A549 (cell line): ENCODE measurements at regions of chr6 and their contacts with region 1.

Region 1: DNA sequence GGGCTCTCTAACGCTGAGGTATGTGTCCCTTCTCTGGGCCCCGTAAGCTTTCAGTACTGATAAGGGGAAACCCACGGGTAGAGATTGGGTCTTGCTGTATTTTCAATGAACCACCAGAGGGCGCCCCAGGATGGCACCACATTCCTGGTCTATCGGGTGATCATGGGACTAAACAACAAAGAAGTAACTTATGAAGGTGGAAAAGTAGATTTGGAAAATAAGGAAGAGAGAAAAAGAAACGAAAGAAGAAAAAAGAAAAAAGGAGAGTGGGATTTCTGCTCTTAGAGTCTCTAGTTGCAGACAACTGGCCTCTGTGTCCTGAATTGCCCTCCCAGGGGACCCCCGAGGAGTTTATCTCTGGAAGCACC is 93.8 kb downstream of the GMPR start:
- DNase-seq: peak; percentile 59 to 69
- ATAC-seq: peak; percentile 82 to 91
- H3K4me3 ChIP-seq: no peak overlapping the region
- H3K27ac ChIP-seq: peak overlapping the region in 1 of 2 experiments; percentile 64; a peak in 1 of 6 replicates
- H3K4me1 ChIP-seq: peaks cover 38% of the 10 kb centered on the region
- CTCF ChIP-seq: peak; percentile 76
- EP300 ChIP-seq: no peak
- POLR2A ChIP-seq: no peak
- RAD21 ChIP-seq: peak; percentile 80

Region 2: DNA sequence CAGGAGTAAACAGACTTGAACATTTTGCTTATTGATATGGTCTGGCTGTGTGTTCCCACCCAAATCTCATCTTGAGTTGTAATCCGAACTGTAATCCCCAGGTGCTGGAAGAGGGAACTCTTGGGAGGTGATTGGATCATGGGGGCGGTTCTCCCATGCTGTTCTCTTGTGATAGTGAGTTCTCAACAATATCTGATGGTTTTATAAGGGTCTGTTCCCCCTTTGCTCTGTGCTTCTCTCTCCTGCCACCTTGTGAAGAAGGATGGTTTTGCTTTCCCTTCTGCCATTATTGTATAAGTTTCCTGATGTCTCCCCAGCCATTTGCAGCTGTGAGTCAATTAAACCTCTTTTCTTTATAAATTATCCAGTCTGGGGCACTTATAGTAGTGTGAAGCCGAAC is 163.3 kb before region 1 on chr6:
- CTCF ChIA-PET with region 1: no interaction called
- POLR2A ChIA-PET with region 1: no interaction called
- DNase-seq: peak in 1 of 2 experiments; percentile 16
- ATAC-seq: peak in 1 of 2 experiments; percentile 52; a peak in 3 of 6 replicates
- H3K4me3 ChIP-seq: no peak overlapping the region
- H3K27ac ChIP-seq: no peak overlapping the region
- H3K4me1 ChIP-seq: no peaks in the 10 kb centered on the region
- CTCF ChIP-seq: peak; percentile 16; the same call in 1 of the 3 replicates
- EP300 ChIP-seq: no peak
- POLR2A ChIP-seq: no peak
- RAD21 ChIP-seq: peak; percentile 24 to 25; a peak in 3 of 5 replicates

Region 3: DNA sequence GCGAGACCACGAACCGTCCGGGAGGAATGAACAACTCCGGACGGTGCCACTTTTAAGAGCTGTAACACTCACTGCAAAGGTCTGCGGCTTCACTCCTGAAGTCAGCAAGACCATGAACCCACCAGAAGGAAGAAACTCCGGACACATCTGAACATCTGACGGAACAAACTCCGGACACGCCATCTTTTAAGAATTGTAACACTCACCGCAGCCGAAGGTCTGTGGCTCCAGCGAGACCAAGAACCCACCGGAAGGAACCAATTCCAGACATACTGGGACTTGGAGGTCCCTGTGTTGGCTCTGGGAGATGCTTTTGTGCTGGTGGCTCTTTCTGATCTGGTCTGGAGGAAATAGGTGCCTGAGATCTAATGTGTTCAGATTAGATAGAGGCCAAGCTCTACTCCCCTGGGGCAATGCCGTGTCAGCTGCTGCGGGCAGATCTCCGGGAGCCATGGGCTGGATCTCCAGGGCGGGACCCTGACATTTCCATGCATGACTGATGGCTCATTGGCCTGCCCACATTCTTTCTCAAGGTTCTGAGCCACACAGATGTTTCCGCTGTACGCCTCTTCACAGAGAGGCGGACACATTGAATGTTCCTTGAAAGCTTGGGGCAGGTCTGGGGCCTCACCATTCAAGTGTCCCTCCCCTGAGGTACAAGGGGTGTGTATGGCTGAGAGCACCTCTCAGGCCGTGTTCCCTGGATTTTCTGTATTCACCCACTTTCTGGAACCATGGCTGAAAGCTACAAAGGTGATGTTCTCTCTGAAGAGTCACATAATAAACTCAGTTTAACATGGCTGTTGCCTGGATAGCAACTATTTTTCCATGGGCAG is 64.5 kb before region 1 on chr6:
- CTCF ChIA-PET with region 1: no interaction called
- POLR2A ChIA-PET with region 1: no interaction called
- DNase-seq: no peak
- ATAC-seq: no peak
- H3K4me3 ChIP-seq: no peak overlapping the region
- H3K27ac ChIP-seq: no peak overlapping the region
- H3K4me1 ChIP-seq: no peaks in the 10 kb centered on the region
- CTCF ChIP-seq: no peak
- EP300 ChIP-seq: no peak
- POLR2A ChIP-seq: no peak
- RAD21 ChIP-seq: no peak

Region 4: GRCh38 chr6:16316741-16317251 is 15.4 kb before region 1 on chr6:
- CTCF ChIA-PET with region 1: interaction called, 23 read pairs
- POLR2A ChIA-PET with region 1: no interaction called
- DNase-seq: peak; percentile 21 to 26
- ATAC-seq: peak in 1 of 2 experiments; percentile 44; a peak in 3 of 6 replicates
- H3K4me3 ChIP-seq: no peak overlapping the region
- H3K27ac ChIP-seq: no peak overlapping the region
- H3K4me1 ChIP-seq: peaks cover 9% of the 10 kb centered on the region; the same call in 1 of the 3 replicates
- CTCF ChIP-seq: peak; percentile 55
- EP300 ChIP-seq: no peak
- POLR2A ChIP-seq: no peak
- RAD21 ChIP-seq: peak in 1 of 2 experiments; percentile 29; a peak in 1 of 5 replicates

Region 5: DNA sequence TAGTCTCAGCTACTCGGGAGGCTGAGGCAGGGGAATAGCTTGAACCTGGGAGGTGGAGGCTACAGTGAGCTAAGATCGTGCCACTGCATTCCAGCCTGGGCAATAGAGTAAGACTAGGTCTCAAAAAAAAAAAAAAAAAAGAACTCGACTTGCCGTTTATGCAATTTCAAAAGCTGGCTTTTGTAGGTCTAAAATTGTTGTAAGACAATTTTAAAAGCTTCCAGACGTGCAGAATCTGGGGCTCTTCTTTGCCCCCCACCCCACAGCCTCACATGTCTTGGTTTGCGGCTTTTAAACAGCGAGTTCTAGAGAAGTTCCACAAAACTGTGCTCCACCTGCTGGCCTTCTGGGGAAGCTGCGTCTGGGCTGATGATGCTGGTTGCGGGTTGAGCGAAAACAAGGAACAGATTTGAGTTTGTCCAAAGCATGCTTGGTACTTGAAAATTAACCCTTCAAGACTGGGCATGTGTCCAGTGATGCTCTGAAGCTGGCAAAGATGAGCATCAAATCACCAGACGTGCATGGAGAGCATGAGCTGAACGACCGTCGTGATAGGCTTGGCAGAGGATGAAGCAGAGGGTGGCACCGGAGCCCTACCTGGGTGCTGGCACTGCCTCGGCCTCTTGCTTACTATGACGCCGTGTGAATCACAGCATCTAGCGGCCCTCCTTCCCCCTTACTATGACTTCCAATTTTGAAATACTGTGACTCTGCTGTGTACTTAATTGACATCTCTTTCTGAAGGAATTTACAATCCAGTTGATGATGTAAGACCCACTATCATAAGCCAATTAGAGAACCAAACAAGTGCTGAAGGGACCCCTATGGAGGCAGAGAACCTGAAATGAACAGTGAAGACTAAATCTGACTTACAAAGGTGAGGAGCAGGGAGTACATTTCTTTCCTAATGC is 77.6 kb after region 1 on chr6:
- CTCF ChIA-PET with region 1: interaction called, 46 read pairs
- POLR2A ChIA-PET with region 1: no interaction called
- DNase-seq: peak; percentile 24 to 60
- ATAC-seq: peak; percentile 88 to 92
- H3K4me3 ChIP-seq: no peak overlapping the region
- H3K27ac ChIP-seq: no peak overlapping the region
- H3K4me1 ChIP-seq: peaks cover 5% of the 10 kb centered on the region; the same call in 2 of the 3 replicates
- CTCF ChIP-seq: peak; percentile 56
- EP300 ChIP-seq: no peak
- POLR2A ChIP-seq: no peak
- RAD21 ChIP-seq: peak; percentile 52 to 56

Region 6: GRCh38 chr6:16461491-16461890 is 129.3 kb after region 1 on chr6:
- CTCF ChIA-PET with region 1: no interaction called
- POLR2A ChIA-PET with region 1: no interaction called
- DNase-seq: no peak
- ATAC-seq: no peak
- H3K4me3 ChIP-seq: no peak overlapping the region
- H3K27ac ChIP-seq: no peak overlapping the region
- H3K4me1 ChIP-seq: no peaks in the 10 kb centered on the region
- CTCF ChIP-seq: no peak
- EP300 ChIP-seq: no peak
- POLR2A ChIP-seq: no peak
- RAD21 ChIP-seq: no peak

Region 7: GRCh38 chr6:16514249-16514648 is 182.1 kb after region 1 on chr6:
- CTCF ChIA-PET with region 1: interaction called, 11 read pairs
- POLR2A ChIA-PET with region 1: no interaction called
- DNase-seq: peak; percentile 40 to 48
- ATAC-seq: peak; percentile 64 to 71; a peak in 5 of 6 replicates
- H3K4me3 ChIP-seq: no peak overlapping the region
- H3K27ac ChIP-seq: no peak overlapping the region
- H3K4me1 ChIP-seq: no peaks in the 10 kb centered on the region; the same call in 2 of the 3 replicates
- CTCF ChIP-seq: peak; percentile 39
- EP300 ChIP-seq: no peak
- POLR2A ChIP-seq: no peak
- RAD21 ChIP-seq: peak; percentile 54

Region 8: DNA sequence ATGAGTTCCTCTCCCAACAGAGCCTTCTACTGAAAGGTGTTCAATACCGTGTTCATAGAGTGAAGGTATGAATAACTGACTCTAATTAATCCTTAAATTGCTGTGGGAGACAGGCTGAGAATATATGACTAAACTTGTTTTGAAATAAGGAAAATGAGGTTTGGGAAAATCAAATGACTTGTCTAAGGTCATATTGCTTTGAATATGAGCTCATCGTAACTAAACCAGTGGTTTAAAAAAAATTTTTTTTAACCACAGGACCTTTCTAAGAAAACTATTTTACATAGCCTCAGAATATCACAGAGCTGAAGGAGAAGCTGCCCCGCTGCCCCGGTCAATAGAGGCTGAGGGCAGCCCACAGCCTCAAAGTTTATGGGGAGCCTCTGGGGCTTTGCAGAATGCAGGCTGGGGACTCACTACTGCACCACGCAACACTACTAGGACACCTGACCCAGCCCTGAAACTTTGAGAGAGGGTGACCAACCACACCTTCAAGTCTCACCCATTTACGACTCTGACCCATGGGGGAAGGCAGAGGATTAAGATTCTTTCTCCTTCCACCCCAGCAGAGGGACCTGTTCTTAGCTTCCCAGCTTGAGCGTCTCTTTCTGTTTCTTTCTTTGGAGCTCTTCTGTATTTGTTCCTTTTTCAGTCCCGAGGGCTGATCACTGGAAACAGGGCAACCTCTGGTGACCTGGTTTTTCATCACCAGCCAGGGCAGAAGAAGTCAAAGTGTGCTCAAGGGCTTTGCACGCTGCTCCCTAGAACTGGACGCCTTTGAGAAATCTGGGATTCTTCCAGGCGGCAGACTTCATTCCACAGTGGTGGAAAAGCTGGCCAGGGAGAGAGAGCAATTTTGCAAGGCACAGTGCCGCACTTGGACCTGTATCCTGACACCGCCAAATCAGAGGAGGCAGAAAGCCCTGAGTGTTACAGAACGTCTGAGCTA is 208.9 kb after region 1 on chr6:
- CTCF ChIA-PET with region 1: no interaction called
- POLR2A ChIA-PET with region 1: no interaction called
- DNase-seq: peak in 1 of 2 experiments; percentile 3
- ATAC-seq: no peak
- H3K4me3 ChIP-seq: no peak overlapping the region
- H3K27ac ChIP-seq: no peak overlapping the region
- H3K4me1 ChIP-seq: no peaks in the 10 kb centered on the region
- CTCF ChIP-seq: no peak
- EP300 ChIP-seq: no peak
- POLR2A ChIP-seq: no peak
- RAD21 ChIP-seq: no peak